Caco-2 (cell line): ENCODE measurements at regions of chr2 and their contacts with region 1.

Region 1: DNA sequence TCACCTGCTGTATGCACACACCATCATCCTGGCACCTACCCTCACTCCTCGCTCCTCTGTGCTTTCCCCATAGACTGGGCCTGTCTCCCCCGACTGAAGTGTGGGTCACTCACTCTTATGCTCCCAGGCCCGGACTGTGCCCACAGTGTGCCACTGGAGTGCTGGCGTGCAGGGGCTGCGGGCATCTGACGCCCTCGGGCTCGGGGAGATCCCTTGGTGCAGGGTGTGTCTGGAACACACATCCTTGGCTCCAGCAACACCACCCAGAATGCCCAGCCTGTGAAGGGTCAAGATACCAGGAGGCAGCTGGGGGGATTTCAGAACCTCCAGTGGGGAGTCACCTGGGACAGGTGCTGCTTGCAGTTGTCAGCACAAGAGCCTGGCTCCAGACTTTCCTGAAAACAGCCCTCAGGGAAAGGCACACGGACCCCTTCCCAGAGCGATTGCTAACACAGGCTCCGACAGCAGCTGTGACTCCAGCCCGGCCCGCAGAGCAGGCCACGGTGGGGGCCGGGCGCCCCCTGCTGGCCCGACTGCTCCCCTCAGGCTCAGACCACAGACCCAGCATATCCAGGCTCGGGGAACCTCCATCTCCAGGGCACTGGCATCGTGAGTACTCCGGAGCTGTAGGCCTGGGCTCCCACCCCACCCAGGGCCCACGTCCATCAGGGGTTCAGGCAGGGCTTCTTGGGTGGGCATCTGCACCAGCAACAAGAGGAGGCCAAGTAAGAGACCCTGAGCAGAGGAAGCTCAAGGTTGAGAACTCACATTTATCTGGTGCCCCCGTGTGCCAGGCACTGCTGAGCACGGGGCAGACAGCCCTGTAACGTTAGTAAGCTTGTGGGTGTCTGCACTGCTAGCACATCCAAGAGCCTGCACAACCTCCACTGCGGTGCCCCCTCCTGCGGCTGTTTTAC is 8.6 kb downstream of the HS1BP3 start:
- DNase-seq: peak; percentile 64 to 88
- H3K4me3 ChIP-seq: no peak overlapping the region
- H3K4me3 Mint-ChIP-seq: no peak overlapping the region
- H3K27ac Mint-ChIP-seq: no peak overlapping the region
- H3K4me1 ChIP-seq: no peaks in the 10 kb centered on the region
- H3K4me1 Mint-ChIP-seq: no peaks in the 10 kb centered on the region
- H3K27me3 ChIP-seq: no peaks in the 10 kb centered on the region
- H3K27me3 Mint-ChIP-seq: no peaks in the 10 kb centered on the region
- CTCF ChIP-seq: peak; percentile 97 to 99

Region 2: DNA sequence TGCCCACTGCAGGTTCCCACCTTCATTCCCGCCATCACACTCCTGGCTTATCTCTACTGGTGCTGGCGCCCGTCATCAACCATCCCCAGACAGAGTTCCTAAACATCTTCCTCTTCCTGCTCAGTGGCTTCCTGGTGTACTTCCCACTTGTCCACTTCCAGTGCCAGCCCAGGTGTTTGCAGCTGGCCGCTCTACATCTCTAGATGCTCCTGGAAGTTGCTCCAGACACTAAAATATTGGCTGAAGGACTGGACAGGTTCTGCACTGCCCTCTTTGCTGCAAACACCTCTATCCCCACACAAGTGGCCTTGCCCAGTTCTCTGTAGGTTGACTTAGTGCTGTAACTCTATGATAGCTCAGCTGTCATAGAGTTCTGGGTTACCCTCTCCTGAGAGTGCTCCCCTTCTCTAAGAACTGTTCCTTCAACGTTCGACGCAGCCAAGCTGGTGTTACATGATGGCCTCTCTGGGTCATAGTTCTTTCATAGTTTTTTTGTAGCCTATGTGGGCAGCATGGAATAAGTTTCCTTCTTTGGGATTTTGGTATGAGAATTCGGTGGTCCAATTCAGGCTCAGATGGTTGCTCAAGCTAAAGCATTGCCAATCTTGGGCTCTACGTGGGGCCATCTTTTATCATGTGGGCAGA is 245.8 kb before region 1 on chr2:
- CTCF ChIA-PET with region 1: interaction called, 24 read pairs
- POLR2A ChIA-PET with region 1: no interaction called
- intact Hi-C with region 1: loop called (anchors 1 kb)
- DNase-seq: no peak
- H3K4me3 ChIP-seq: no peak overlapping the region
- H3K4me3 Mint-ChIP-seq: no peak overlapping the region
- H3K27ac Mint-ChIP-seq: no peak overlapping the region
- H3K4me1 ChIP-seq: no peaks in the 10 kb centered on the region
- H3K4me1 Mint-ChIP-seq: no peaks in the 10 kb centered on the region
- H3K27me3 ChIP-seq: no peaks in the 10 kb centered on the region
- H3K27me3 Mint-ChIP-seq: no peaks in the 10 kb centered on the region
- CTCF ChIP-seq: no peak

Region 3: DNA sequence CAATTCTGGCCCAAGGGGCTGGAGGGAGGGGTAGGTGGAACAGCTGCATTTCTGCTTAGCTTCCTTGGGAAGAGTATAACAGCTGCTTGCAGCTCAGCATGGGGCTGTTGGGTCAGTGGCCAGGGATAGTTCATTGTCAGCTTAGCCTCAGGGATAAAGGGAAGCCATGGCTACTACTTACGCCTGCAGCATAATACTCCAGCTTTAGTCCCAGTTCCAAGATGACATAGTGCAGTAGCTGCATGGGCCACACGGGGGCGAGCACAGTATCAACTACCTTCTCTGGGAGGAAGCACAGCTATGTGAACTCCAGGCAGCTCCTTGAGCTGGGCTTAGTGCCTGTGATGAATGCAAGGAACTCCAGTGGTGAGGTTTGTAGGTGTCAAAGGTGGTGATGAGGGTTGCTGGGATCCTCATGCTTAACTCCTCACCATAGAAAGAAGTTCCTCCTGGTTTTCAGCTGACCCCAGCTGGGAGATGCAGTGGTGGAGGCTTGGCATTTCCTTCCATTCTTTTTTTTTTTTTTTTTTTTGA is 230.9 kb before region 1 on chr2:
- CTCF ChIA-PET with region 1: interaction called, 11 read pairs
- POLR2A ChIA-PET with region 1: interaction called, 6 read pairs
- intact Hi-C with region 1: loop called (anchors 1 kb)
- DNase-seq: peak; percentile 81 to 83
- H3K4me3 ChIP-seq: no peak overlapping the region
- H3K4me3 Mint-ChIP-seq: no peak overlapping the region
- H3K27ac Mint-ChIP-seq: no peak overlapping the region
- H3K4me1 ChIP-seq: no peaks in the 10 kb centered on the region
- H3K4me1 Mint-ChIP-seq: peaks cover 6% of the 10 kb centered on the region
- H3K27me3 ChIP-seq: no peaks in the 10 kb centered on the region
- H3K27me3 Mint-ChIP-seq: no peaks in the 10 kb centered on the region
- CTCF ChIP-seq: peak; percentile 79 to 83

Region 4: DNA sequence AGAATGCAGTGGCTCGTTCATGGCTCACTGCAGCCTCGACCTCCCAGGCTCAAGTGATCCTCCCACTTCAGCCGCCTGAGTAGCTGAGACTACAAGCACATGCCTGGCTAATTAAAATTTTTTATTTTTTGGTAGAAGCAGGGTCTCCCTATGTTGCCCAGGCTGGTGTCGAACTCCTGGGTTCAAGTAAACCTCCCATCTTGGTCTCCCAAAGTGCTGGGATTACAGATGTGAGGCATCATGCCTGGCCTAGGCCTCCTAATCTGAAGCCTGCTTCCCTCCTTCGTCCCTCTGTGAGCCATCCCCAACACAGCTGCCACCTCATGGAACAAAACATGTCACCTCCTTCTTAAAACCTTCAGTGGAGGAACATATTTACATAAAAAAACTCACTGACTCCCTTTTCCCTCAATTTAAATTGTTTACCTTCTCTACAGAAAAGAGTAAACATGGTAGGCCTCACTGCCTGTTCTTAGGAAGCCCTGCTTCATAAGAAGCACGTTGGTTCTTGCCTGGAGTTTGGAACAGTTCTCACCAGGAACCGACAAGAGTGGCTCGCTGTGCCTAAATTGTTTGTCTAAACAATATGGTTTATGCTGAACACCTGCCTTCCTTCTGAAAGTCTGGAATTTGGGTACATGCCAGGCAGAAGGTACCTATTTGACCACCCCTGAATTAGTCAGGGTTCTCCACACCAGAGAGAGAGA is 207.6 kb before region 1 on chr2:
- CTCF ChIA-PET with region 1: no interaction called
- POLR2A ChIA-PET with region 1: no interaction called
- intact Hi-C with region 1: no loop called
- DNase-seq: no peak
- H3K4me3 ChIP-seq: no peak overlapping the region
- H3K4me3 Mint-ChIP-seq: no peak overlapping the region
- H3K27ac Mint-ChIP-seq: no peak overlapping the region
- H3K4me1 ChIP-seq: peaks cover 8% of the 10 kb centered on the region; the same call in 1 of the 2 replicates
- H3K4me1 Mint-ChIP-seq: peaks cover 18% of the 10 kb centered on the region
- H3K27me3 ChIP-seq: no peaks in the 10 kb centered on the region
- H3K27me3 Mint-ChIP-seq: no peaks in the 10 kb centered on the region
- CTCF ChIP-seq: no peak

Region 5: DNA sequence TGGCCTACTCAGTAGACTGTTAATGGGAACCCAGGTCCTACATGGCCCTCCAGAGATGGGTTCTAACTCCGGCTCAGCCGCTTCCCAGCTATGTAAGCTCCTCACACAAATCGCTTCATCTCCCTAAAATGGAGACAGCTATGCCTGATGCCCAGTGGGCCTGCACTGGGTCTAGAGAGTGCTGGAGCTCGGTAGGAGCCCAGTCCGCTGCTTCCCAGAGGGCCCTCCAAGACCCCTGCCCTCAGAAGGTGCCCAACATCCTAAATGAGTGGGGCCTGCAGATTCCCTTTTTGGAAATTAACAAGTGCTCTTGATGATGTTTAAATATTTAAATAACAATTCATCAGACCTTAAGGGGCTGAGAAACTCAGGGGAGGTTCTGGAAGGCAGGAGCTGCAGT is 38.5 kb before region 1 on chr2:
- CTCF ChIA-PET with region 1: no interaction called
- POLR2A ChIA-PET with region 1: no interaction called
- intact Hi-C with region 1: loop called (anchors 2 kb)
- DNase-seq: peak in 1 of 2 experiments; percentile 12
- H3K4me3 ChIP-seq: no peak overlapping the region
- H3K4me3 Mint-ChIP-seq: no peak overlapping the region
- H3K27ac Mint-ChIP-seq: no peak overlapping the region
- H3K4me1 ChIP-seq: 0 out of 2 replicates have a peak, but pooled peaks cover 3% of the 10 kb centered on the region
- H3K4me1 Mint-ChIP-seq: no peaks in the 10 kb centered on the region
- H3K27me3 ChIP-seq: no peaks in the 10 kb centered on the region
- H3K27me3 Mint-ChIP-seq: no peaks in the 10 kb centered on the region
- CTCF ChIP-seq: no peak